GM12878 (cell line): ENCODE measurements at regions of chr1 and their contacts with region 1.

Region 1: DNA sequence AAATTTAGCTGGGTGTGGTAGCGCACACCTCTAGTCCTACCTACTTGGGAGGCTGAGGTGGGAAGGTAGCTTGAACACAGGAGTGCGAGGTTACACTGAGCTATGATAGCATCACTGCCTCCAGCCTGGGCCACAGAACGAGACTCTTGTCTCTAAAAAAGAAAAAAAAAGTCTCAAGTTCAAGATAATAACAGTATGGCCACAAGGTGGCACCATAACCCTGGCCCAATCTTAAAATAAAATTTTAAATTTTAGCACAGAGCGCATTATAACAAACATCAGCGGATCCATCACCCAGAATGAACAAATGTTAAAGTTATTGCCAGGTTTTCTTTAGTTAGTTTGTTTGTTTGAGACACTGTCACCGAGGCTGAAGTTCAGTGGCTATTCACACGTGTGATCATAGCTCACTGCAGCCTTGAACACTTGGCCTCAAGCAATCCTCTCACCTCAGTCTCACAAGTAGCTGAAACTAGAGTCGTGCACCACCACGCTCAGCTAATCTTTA is 2.9 kb upstream of the HTR6 start:
- DNase-seq: no peak
- ATAC-seq: peak; percentile 27; the same call in 2 of the 3 replicates
- H3K4me3 ChIP-seq: no peak overlapping the region
- H3K27ac ChIP-seq: no peak overlapping the region
- H3K4me1 ChIP-seq: peaks cover 6% of the 10 kb centered on the region; the same call in 1 of the 2 replicates
- H3K27me3 ChIP-seq: peaks cover 0 to 2% of the 10 kb centered on the region in 2 experiments; a peak in 2 of 4 replicates
- CTCF ChIP-seq: peak; percentile 43 to 69 (median 63)
- EP300 ChIP-seq: no peak
- POLR2A ChIP-seq: no peak
- RAD21 ChIP-seq: peak; percentile 78

Region 2: DNA sequence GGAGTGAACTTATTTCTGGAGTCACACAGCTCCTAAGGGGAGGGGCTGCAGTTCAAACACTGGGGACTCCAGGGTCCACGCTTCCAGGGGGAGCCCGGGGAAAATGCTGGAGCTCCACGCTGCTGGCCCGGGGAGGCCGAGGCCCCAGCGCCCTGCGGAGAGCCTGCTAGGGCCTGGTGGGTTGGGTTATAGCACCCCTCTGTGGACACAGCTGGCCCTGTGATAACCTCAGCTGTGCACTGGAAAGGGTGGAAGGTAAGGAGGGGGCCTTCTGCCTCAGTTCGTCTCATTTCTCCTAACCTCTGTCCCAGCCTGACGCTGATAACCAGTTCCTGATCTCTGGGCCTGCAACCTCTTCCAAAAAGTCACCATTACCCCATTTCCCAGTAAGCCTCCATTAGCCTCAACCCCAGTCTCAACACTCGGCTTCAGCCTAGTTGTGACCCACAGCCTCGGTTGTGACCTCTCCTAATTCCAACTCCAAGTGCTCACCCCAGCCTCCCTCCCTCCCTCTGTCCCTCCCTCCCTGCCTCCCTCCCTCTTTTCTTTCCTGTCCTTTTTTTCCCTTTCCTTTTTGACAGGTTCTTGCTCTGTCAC is 10.5 kb before region 1 on chr1:
- CTCF ChIA-PET with region 1: interaction called, 14 read pairs
- POLR2A ChIA-PET with region 1: no interaction called
- RAD21 ChIA-PET with region 1: interaction called, 6 read pairs
- SMC1A ChIA-PET with region 1: no interaction called
- in situ Hi-C with region 1: no loop called
- intact Hi-C with region 1: no loop called
- DNase-seq: no peak
- ATAC-seq: peak; percentile 81
- H3K4me3 ChIP-seq: no peak overlapping the region
- H3K27ac ChIP-seq: no peak overlapping the region
- H3K4me1 ChIP-seq: no peaks in the 10 kb centered on the region
- H3K27me3 ChIP-seq: no peaks in the 10 kb centered on the region; a peak in 1 of 4 replicates
- CTCF ChIP-seq: peak; percentile 59 to 86 (median 74)
- EP300 ChIP-seq: no peak
- POLR2A ChIP-seq: no peak
- RAD21 ChIP-seq: peak; percentile 83

Region 3: DNA sequence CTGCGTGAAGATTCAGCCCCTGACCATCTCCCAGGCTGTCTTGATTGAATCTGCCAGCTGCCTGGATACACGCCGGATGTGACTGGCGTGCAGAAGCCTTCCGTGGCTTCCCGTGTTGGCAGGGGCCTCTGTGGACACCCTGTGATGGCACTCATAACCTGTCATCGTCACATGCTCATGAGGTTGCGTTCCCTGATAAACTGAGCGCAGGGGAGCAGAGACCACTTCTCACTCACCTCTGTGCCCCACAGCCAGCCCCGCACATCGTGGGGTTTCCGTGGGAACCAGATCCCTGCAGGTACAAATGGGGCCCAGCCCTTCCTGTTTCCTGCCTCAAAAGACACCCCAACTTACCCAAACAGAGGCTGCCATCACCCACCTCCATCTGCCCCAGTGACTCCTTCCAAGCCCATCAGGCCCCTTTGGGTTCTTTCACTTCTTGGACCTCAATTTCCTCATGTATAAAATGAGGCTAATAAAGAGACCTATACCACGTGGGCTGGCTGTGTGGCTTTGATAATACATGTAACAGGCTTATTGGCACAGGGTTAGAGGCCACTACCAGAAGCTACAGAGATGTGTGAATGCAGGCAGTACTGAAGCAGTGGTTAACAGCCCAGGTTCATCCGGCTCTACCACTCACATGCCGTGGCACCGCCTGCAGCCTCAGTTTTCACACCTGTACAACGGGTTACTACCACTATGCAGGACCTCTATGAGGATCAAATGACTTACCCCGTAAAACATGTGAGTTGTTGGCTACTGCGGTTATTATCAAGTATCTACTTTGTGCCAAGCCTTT is 26.5 kb after region 1 on chr1:
- CTCF ChIA-PET with region 1: interaction called, 10 read pairs
- POLR2A ChIA-PET with region 1: no interaction called
- RAD21 ChIA-PET with region 1: no interaction called
- SMC1A ChIA-PET with region 1: no interaction called
- in situ Hi-C with region 1: no loop called
- intact Hi-C with region 1: no loop called
- DNase-seq: no peak
- ATAC-seq: no peak
- H3K4me3 ChIP-seq: no peak overlapping the region
- H3K27ac ChIP-seq: no peak overlapping the region
- H3K4me1 ChIP-seq: no peaks in the 10 kb centered on the region
- H3K27me3 ChIP-seq: no peaks in the 10 kb centered on the region
- CTCF ChIP-seq: no peak
- EP300 ChIP-seq: no peak
- POLR2A ChIP-seq: no peak
- RAD21 ChIP-seq: no peak

Region 4: DNA sequence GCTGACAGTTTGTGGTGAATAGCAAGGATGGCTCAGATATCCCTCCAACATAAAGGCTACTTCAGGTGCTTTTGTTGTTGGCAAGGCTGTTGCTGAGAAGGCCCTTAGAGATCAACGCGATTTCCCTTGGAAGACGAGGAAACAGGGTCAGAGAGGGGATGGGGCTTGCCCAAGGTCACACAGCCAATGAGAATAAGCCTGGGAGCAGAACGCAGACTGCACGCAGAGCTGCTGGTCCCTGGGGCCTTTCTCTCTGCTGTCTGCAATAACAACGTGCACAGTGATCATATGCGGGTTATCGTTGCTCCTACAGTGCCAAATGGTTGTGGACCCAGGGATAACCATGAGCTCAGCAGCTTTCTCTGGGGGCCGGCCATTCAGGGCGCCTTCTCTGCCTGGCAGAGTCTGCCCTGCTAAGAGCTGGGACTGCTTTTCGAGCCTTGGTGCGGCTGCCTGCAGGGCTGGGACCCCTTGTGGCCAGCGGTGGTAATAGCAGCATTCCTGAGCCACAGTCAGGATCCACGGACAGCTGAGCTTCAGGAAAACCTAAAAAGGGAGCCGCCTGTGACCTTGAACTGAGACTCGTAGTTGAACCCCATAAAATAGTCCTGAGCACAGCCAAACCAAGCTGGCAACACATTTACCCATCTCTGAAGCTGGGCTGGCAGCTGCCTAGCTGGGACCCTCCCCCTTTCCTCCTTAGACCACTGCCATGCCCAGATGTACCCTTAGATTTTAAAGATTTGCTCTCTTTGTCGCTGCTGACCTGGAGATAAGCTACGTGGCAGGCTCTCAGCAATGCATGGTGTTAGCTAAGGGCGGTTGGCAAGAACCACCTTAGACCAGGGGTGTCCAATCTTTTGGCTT is 42.7 kb after region 1 on chr1:
- CTCF ChIA-PET with region 1: interaction called, 378 read pairs
- POLR2A ChIA-PET with region 1: no interaction called
- RAD21 ChIA-PET with region 1: interaction called, 84 read pairs
- SMC1A ChIA-PET with region 1: interaction called, 99 read pairs
- in situ Hi-C with region 1: loop called (anchors 5 kb)
- intact Hi-C with region 1: loop called (anchors 1 kb)
- DNase-seq: no peak
- ATAC-seq: peak; percentile 95
- H3K4me3 ChIP-seq: no peak overlapping the region
- H3K27ac ChIP-seq: peak overlapping the region; percentile 13; the same call in 1 of the 2 replicates
- H3K4me1 ChIP-seq: peaks cover 17% of the 10 kb centered on the region
- H3K27me3 ChIP-seq: no peaks in the 10 kb centered on the region
- CTCF ChIP-seq: peak; percentile 81 to 98 (median 91)
- EP300 ChIP-seq: no peak
- POLR2A ChIP-seq: no peak
- RAD21 ChIP-seq: peak; percentile 74

Region 5: GRCh38 chr1:19762175-19762779 is 100.5 kb after region 1 on chr1:
- CTCF ChIA-PET with region 1: interaction called, 16 read pairs
- POLR2A ChIA-PET with region 1: no interaction called
- RAD21 ChIA-PET with region 1: interaction called, 5 read pairs
- SMC1A ChIA-PET with region 1: interaction called, 9 read pairs
- in situ Hi-C with region 1: no loop called
- intact Hi-C with region 1: loop called (anchors 5 kb)
- DNase-seq: no peak
- ATAC-seq: peak; percentile 81
- H3K4me3 ChIP-seq: no peak overlapping the region
- H3K27ac ChIP-seq: no peak overlapping the region
- H3K4me1 ChIP-seq: peaks cover 3% of the 10 kb centered on the region
- H3K27me3 ChIP-seq: no peaks in the 10 kb centered on the region
- CTCF ChIP-seq: peak; percentile 63 to 84 (median 80)
- EP300 ChIP-seq: no peak
- POLR2A ChIP-seq: no peak
- RAD21 ChIP-seq: peak; percentile 55

Region 6: DNA sequence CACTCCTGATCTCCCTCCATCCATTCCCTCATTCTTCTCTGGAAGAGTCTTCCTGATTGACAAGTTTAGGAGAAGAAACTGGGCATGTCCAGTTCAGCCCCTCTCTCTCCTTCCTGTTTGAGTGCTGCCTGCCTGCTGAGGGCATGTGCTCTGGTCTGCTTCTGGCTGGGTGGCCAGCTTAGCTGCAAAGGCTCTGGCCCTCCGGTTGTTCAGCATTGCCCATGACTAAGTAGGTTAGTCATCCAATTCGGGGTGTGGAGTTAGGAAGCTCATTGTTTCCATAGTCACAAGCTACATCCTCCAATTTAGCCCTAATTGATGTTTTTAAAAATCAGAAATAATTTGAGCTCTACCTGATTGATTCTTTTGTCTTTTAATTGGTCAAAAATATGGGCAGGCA is 287.2 kb after region 1 on chr1:
- CTCF ChIA-PET with region 1: no interaction called
- POLR2A ChIA-PET with region 1: no interaction called
- RAD21 ChIA-PET with region 1: no interaction called
- SMC1A ChIA-PET with region 1: no interaction called
- in situ Hi-C with region 1: no loop called
- intact Hi-C with region 1: no loop called
- DNase-seq: no peak
- ATAC-seq: no peak
- H3K4me3 ChIP-seq: no peak overlapping the region
- H3K27ac ChIP-seq: no peak overlapping the region
- H3K4me1 ChIP-seq: no peaks in the 10 kb centered on the region
- H3K27me3 ChIP-seq: no peaks in the 10 kb centered on the region; a peak in 1 of 4 replicates
- CTCF ChIP-seq: no peak
- EP300 ChIP-seq: no peak
- POLR2A ChIP-seq: no peak
- RAD21 ChIP-seq: no peak